Naive thymus-derived CD4-positive, alpha-beta T cell (primary cell): ENCODE measurements at regions of chr3 and their contacts with region 1.

Region 1: DNA sequence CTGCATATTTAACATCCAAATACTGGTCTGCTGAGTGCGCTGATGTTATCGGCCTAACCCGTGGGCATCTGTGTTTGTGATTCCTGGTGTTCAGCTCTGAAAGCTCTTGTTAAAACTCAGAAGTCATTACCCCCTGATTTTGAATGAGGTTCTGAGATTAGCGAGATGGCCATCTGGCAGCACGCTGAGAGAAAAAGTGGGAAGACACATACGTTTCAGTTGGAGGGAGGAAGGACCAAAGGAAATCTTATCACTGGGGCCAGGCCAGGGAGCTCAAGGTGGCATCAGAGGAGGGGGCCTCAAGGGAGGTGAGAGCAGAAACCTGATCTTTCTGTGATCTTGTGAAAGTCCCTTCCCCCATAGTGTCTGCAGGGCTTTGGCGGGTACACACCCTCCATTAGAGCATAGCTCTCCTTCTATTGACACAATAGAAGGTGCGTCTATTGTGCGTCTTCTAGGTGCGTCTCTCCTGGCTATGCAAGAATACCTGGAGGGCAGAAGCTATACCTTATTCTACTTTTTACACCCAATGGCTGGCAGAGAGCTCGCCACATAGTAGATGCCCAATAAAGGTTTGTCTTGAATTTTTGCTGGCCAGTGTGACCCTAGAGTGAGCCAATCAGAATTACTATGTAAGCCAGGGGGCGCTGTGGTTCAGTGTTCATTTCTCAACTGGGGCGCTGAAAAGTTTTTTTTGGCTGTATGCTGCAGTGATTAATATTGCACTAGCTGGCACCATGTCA is 182.4 kb downstream of the SHQ1 start:
- DNase-seq: peak; percentile 34 to 80 (median 59)
- ATAC-seq: peak; percentile 73
- H3K4me3 ChIP-seq: no peak overlapping the region
- H3K4me3 Mint-ChIP-seq: no peak overlapping the region
- H3K27ac ChIP-seq: no peak overlapping the region
- H3K27ac Mint-ChIP-seq: peak overlapping the region in 1 of 9 donors; percentile 59
- H3K4me1 ChIP-seq: peaks cover 0 to 4% of the 10 kb centered on the region in 2 donors
- H3K4me1 Mint-ChIP-seq: no peaks in the 10 kb centered on the region
- H3K27me3 ChIP-seq: no peaks in the 10 kb centered on the region
- H3K27me3 Mint-ChIP-seq: no peaks in the 10 kb centered on the region

Region 2: DNA sequence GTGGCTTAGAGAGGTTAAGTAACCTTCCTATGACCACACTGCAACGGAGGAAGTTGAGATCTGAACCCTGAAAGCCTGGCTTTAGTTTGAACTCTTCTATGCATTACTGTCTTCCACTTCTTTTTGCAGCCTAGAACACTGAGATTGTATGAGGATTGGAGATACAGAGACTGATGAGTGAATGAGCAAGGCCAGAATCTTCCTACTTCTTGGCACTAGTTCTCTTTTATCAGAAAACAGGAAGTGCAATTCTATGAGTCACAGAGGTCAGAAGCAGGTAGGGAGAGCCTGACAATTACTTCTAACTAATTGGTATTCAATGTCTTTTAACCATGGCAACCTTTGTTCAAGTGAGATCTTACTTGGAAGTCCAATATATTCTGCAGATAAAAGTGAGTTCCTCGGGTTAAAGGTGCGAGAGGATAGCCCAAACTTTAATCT is 36.7 kb before region 1 on chr3:
- CTCF ChIA-PET with region 1: no interaction called
- POLR2A ChIA-PET with region 1: no interaction called
- intact Hi-C with region 1: no loop called
- DNase-seq: no peak
- ATAC-seq: peak; percentile 74
- H3K4me3 ChIP-seq: no peak overlapping the region
- H3K4me3 Mint-ChIP-seq: peak overlapping the region in 1 of 10 donors; percentile 48
- H3K27ac ChIP-seq: no peak overlapping the region
- H3K27ac Mint-ChIP-seq: peak overlapping the region in 7 of 9 donors; percentile 1 to 69 (median 38)
- H3K4me1 ChIP-seq: peaks cover 0 to 7% of the 10 kb centered on the region in 2 donors
- H3K4me1 Mint-ChIP-seq: peaks cover 6 to 38% (median 12%) of the 10 kb centered on the region in 7 donors
- H3K27me3 ChIP-seq: no peaks in the 10 kb centered on the region
- H3K27me3 Mint-ChIP-seq: no peaks in the 10 kb centered on the region

Region 3: DNA sequence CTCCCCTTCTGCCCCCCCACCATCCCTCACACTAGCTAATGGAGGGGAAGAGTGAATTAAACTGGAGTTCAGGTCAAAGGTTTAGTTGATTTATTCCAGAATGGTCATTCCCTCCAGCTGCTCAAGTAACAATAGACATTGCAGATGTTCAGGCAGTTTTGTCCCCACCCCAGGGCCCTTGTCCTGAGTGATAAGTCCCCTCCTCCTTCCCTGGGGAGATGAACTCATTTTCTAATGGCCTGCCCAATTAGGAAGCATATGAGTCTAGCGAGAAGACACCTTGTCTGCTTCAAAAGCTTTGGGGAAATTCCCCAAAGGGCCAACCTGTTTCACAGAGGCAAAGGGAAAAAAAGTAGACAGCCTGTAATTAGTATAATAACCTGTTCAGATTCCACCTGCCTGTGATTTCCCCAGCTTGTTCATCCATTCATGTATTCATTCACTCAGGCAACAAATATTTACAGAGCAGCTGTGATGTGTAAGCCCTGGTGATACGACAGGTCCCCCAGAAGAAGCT is 17.1 kb after region 1 on chr3:
- CTCF ChIA-PET with region 1: interaction called, 11 read pairs
- POLR2A ChIA-PET with region 1: no interaction called
- intact Hi-C with region 1: no loop called
- DNase-seq: no peak
- ATAC-seq: no peak
- H3K4me3 ChIP-seq: no peak overlapping the region
- H3K4me3 Mint-ChIP-seq: no peak overlapping the region
- H3K27ac ChIP-seq: no peak overlapping the region
- H3K27ac Mint-ChIP-seq: peak overlapping the region in 2 of 9 donors; percentile 22 to 52
- H3K4me1 ChIP-seq: no peaks in the 10 kb centered on the region
- H3K4me1 Mint-ChIP-seq: peaks cover 0 to 6% (median 0%) of the 10 kb centered on the region in 7 donors
- H3K27me3 ChIP-seq: no peaks in the 10 kb centered on the region
- H3K27me3 Mint-ChIP-seq: peaks cover 0 to 3% (median 0%) of the 10 kb centered on the region in 5 donors

Region 4: DNA sequence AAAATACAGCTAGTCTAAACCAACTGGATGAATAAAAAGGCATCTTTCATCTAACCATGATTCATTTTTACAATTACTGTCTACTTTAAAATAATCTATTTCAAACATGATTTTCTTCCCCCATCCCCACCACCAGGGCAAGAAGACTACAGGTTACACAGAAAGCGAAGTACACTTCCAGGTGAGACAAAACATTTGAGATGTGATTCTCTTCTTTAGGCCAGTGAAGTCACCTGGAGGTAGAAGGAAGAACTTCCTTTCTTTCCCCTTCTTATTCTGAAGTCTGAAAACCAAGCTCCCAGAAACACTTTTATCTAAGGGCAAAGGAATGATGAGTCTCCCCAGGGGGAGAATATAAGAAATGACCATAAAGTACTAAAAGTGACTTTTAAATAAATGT is 145.7 kb after region 1 on chr3:
- CTCF ChIA-PET with region 1: interaction called, 26 read pairs
- POLR2A ChIA-PET with region 1: interaction called, 5 read pairs
- intact Hi-C with region 1: loop called in 1 of 2 experiments (anchors 2 kb)
- DNase-seq: peak in 1 of 9 donors; percentile 15
- ATAC-seq: no peak
- H3K4me3 ChIP-seq: no peak overlapping the region
- H3K4me3 Mint-ChIP-seq: no peak overlapping the region
- H3K27ac ChIP-seq: no peak overlapping the region
- H3K27ac Mint-ChIP-seq: peak overlapping the region in 3 of 9 donors; percentile 18 to 67 (median 58)
- H3K4me1 ChIP-seq: peaks cover 0 to 3% of the 10 kb centered on the region in 2 donors
- H3K4me1 Mint-ChIP-seq: peaks cover 2 to 19% (median 10%) of the 10 kb centered on the region in 7 donors
- H3K27me3 ChIP-seq: no peaks in the 10 kb centered on the region
- H3K27me3 Mint-ChIP-seq: no peaks in the 10 kb centered on the region

Region 5: DNA sequence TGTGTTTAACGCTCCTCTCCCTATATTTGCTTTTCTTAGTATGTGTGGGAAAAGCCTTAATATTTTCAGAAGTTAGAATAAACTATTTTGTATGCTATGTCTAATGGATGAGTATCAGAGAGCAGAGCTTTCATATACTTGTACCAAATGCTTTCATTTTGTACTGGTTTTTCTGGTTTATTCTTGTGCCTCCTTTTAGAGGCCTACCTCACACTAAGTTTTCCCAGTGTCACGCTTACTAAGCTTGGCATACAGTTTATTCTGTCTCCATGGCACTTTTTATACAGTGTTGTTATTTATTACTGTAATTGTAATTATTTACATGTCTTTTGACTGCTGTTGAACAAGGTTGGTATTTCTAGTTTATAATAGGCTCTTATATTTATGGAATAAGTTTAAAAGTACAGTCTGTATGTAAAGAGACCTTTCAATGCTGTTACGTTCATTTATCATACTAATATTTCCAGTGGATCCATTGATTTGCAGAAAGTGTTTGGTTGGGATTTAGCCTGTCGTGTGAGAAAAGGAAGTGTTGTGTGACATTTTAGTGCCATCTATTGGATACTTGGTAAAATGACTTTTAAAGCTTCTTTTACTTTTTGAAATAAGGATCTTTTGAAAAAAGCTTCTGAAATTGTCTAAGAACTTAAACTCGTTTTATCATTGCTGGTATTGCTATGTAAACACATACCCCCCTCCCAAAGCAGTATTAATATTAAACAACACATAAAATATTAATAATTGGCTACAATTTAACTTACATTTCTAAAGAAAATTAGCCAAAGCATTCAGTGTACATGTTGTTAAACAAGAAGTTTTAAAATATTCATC is 390.4 kb after region 1 on chr3:
- CTCF ChIA-PET with region 1: interaction called, 3 read pairs
- POLR2A ChIA-PET with region 1: no interaction called
- intact Hi-C with region 1: loop called in 1 of 2 experiments (anchors 10 kb)
- DNase-seq: peak in 6 of 9 donors; percentile 16 to 52 (median 26)
- ATAC-seq: peak; percentile 54
- H3K4me3 ChIP-seq: no peak overlapping the region
- H3K4me3 Mint-ChIP-seq: no peak overlapping the region
- H3K27ac ChIP-seq: no peak overlapping the region
- H3K27ac Mint-ChIP-seq: peak overlapping the region in 6 of 9 donors; percentile 14 to 46 (median 30)
- H3K4me1 ChIP-seq: no peaks in the 10 kb centered on the region
- H3K4me1 Mint-ChIP-seq: peaks cover 8 to 30% (median 26%) of the 10 kb centered on the region in 7 donors
- H3K27me3 ChIP-seq: no peaks in the 10 kb centered on the region
- H3K27me3 Mint-ChIP-seq: no peaks in the 10 kb centered on the region